Posterior vena cava (tissue), 2 donors: ENCODE measurements at regions of chr22 and their contacts with region 1.

Region 1: DNA sequence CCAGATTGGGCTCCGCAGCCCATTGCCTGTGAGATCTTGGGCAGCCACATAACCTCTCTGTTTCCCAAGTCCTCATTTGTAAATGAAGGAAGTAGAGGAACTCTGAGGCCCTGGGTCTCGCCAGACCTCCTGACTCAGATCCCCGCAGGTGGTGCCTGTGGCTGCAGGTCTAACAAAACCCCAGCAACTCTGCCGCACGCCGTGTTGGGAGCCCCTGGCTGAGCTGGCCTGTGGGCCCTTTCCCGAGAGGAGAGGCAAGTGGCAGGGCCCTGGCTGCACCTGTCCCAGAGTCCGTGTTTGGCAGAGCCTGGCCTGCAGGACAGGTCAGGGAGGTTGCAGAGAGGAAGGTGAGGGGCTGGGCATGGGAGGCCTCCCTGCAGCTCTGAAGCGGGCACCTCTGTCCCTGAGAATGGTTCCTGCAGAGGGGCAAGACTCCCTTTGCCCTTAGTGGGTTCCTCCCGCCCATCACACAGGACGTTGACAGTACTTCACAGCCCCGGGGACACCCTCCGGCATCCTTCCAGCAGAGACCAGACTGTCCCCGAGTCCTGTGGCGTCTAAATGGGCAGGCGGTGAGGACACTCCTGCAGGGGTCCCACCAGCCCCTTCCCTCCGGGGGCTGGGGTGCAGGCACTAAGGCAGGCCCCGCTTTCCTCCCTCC is 67.7 kb downstream of the ARHGAP8 start:
- DNase-seq: peak; percentile 76

Region 2: GRCh38 chr22:44862981-44863736 is 43.1 kb after region 1 on chr22:
- intact Hi-C with region 1: no loop called
- DNase-seq: no peak

Region 3: DNA sequence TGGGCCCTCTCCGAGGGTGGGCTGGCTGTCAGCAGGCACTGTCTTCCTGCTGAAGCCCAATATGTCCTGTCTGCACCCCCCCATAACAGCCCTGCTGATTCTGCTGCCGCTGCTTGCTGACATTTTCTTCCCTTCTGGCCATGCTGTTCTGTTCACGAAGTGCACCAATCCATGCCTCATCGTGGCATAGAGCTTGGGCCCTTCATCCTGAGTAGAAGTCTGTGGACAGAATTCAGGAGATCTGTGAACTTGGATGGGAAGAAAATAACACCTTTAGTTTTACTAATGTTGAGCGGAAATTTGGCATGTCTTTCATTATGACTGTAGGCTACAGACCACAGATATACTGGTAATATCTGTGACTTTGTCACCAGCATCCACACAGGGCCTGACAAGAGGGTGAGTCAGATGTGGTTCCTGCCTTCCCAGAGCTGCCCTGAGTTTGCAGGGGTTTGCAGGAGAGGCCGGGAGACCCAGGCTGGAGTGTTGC is 434.7 kb after region 1 on chr22:
- intact Hi-C with region 1: loop called in 1 of 2 experiments (anchors 5 kb)
- DNase-seq: no peak